Activated CD4-positive, alpha-beta T cell treated with anti-CD3 and anti-CD28 coated beads for 36 hours (primary cell): ENCODE measurements at regions of chr3 and their contacts with region 1.

Region 1: GRCh38 chr3:122101646-122102045 is 46.5 kb downstream of the CD86 start:
- DNase-seq: no peak
- ATAC-seq: peak; percentile 54
- H3K4me3 Mint-ChIP-seq: peak overlapping the region; percentile 60
- H3K27ac Mint-ChIP-seq: peak overlapping the region; percentile 79
- H3K4me1 Mint-ChIP-seq: peaks cover 42% of the 10 kb centered on the region
- H3K27me3 Mint-ChIP-seq: no peaks in the 10 kb centered on the region

Region 2: GRCh38 chr3:121735047-121735696 is 366.5 kb before region 1 on chr3:
- CTCF ChIA-PET with region 1: no interaction called
- POLR2A ChIA-PET with region 1: no interaction called
- intact Hi-C with region 1: loop called (anchors 5 kb)
- DNase-seq: no peak
- ATAC-seq: peak; percentile 97
- H3K4me3 Mint-ChIP-seq: no peak overlapping the region
- H3K27ac Mint-ChIP-seq: no peak overlapping the region
- H3K4me1 Mint-ChIP-seq: peaks cover 46% of the 10 kb centered on the region
- H3K27me3 Mint-ChIP-seq: no peaks in the 10 kb centered on the region

Region 3: GRCh38 chr3:121970047-121970446 is 131.6 kb before region 1 on chr3:
- CTCF ChIA-PET with region 1: no interaction called
- POLR2A ChIA-PET with region 1: no interaction called
- intact Hi-C with region 1: no loop called
- DNase-seq: no peak
- ATAC-seq: no peak
- H3K4me3 Mint-ChIP-seq: no peak overlapping the region
- H3K27ac Mint-ChIP-seq: no peak overlapping the region
- H3K4me1 Mint-ChIP-seq: no peaks in the 10 kb centered on the region
- H3K27me3 Mint-ChIP-seq: no peaks in the 10 kb centered on the region

Region 4: DNA sequence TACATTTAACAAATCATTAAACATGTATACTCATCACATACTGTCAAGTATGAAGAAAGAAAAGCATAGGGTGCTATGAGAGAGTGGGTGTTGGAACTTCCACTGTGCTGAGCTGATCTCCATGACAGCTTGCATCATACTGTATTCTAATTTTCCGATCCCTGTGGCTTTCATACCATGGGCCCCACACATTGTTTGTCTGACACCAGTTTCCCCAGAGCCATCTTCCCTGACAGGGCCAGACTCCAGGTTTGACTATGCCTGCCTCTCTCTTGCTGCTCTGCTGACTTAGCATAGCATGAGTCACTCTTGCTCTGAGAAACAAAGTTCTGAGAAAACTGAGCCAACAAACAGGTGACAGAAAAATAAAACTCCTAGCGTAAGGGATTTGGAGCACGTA is 44.8 kb after region 1 on chr3:
- CTCF ChIA-PET with region 1: interaction called, 9 read pairs
- POLR2A ChIA-PET with region 1: no interaction called
- intact Hi-C with region 1: loop called (anchors 1 kb)
- DNase-seq: peak; percentile 88
- ATAC-seq: peak; percentile 99
- H3K4me3 Mint-ChIP-seq: no peak overlapping the region
- H3K27ac Mint-ChIP-seq: peak overlapping the region; percentile 83
- H3K4me1 Mint-ChIP-seq: peaks cover 32% of the 10 kb centered on the region
- H3K27me3 Mint-ChIP-seq: peaks cover 2% of the 10 kb centered on the region

Region 5: DNA sequence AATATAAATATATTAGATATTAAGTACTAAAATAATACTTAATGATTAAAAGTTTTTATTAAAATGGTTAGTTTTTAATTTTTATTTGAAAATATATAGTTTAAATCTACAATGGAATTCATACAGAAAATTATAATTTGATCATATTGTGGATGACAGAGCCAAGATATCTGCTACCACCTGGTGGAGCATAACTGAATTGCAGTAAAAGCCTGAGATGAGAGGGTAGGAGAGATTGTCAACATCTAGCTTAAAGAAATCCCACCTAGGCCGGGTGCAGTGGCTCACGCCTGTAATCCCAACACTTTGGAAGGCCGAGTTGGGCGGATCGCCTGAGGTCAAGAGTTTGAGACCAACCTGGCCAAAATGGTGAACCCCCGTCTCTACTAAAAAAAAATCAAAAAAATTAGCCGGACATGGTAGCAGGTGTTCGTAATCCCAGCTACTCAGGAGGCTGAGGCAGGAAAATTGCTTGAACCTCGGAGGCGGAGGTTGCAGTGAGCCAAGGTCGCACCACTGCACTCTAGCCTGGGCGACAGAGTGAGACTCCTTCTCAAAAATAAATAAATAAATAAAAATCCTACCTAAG is 198.3 kb after region 1 on chr3:
- CTCF ChIA-PET with region 1: interaction called, 54 read pairs
- POLR2A ChIA-PET with region 1: interaction called, 4 read pairs
- intact Hi-C with region 1: loop called (anchors 1 kb)
- DNase-seq: peak; percentile 53
- ATAC-seq: peak; percentile 59
- H3K4me3 Mint-ChIP-seq: no peak overlapping the region
- H3K27ac Mint-ChIP-seq: no peak overlapping the region
- H3K4me1 Mint-ChIP-seq: peaks cover 18% of the 10 kb centered on the region
- H3K27me3 Mint-ChIP-seq: no peaks in the 10 kb centered on the region

Region 6: DNA sequence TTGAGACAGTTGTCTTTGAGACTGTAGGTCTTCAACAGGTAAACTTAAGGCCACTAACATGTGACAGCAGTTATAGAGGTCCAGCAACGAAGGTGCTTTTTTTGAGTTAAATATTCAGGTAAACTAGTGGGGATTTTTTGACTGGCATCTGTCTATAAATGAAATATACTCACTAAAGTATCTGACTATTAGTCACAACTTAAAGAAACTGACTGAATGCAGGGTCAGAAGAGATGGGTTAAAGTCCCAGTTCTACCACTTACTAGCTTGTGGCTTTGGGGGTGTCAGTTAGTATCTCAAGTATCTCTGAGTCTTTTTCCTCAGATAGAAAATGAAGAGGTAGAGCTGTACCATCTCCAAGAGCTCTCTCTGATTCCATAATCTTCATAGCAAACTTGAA is 263.4 kb after region 1 on chr3:
- CTCF ChIA-PET with region 1: interaction called, 4 read pairs
- POLR2A ChIA-PET with region 1: no interaction called
- intact Hi-C with region 1: loop called (anchors 1 to 5 kb)
- DNase-seq: no peak
- ATAC-seq: peak; percentile 73
- H3K4me3 Mint-ChIP-seq: no peak overlapping the region
- H3K27ac Mint-ChIP-seq: peak overlapping the region; percentile 93
- H3K4me1 Mint-ChIP-seq: peaks cover 34% of the 10 kb centered on the region
- H3K27me3 Mint-ChIP-seq: no peaks in the 10 kb centered on the region